ENCODE measurements at regions of chr1 and their contacts with region 1.

Region 1: DNA sequence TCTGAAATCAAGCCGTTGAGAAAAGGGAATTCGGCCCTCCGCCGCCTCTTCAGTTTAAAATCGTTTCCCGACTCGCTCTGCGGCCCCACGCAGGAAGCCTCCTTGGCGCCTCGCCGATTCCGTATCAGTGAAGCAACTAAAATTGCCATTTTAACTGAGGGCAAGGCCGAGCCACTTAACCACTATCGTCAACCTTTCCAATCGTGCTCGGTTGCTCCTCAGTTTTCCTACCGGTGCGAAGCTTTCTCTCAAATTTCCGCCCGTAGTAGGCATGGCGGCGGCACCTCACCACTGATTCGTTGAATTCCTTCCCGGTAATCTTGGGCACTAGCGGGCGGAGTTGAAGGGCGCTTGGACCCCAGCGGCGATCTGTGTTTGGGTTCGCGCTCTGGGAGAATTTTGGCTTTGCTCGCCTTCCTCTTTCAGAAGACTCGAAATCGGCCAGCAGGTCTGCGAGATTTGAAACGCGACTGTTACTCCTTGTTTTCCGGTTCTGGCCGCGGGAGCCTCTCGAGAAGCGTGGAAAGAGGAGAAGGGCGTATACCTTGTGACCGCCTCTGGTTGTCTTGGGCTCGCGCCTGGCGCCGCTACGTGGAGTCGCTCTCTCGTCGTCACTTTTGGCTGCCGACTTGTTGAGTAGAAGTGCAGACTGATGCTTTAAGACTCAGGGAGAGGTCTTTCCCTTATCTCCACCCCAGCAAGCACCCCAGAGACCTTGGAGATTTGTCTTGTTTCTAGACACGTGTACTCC is at the starts of genes CENPL and DARS2:
- DNase-seq: peak; percentile 67 to 93 (median 91)
- ATAC-seq: peak; percentile 94
- H3K4me3 ChIP-seq: peak within 1 kb of the TSS; percentile 99
- H3K4me3 Mint-ChIP-seq: peak within 1 kb of the TSS; percentile 87 to 99 (median 94)
- H3K27ac ChIP-seq: peak within 1 kb of the TSS; percentile 80
- H3K27ac Mint-ChIP-seq: peak within 1 kb of the TSS; percentile 91 to 98 (median 96)
- H3K4me1 ChIP-seq: peaks cover 10 to 14% of the 10 kb centered on the region in 2 donors
- H3K4me1 Mint-ChIP-seq: peaks cover 32 to 68% (median 50%) of the 10 kb centered on the region in 7 donors
- H3K27me3 ChIP-seq: no peaks in the 10 kb centered on the region
- H3K27me3 Mint-ChIP-seq: no peaks in the 10 kb centered on the region
- total RNA-seq, gene CENPL: 5.2 to 25.1 (median 9.5) TPM
- total RNA-seq, gene DARS2: 3.6 to 26.0 (median 13.5) TPM

Region 2: GRCh38 chr1:172826096-172826743 is 998.3 kb before region 1 on chr1:
- CTCF ChIA-PET with region 1: no interaction called
- POLR2A ChIA-PET with region 1: no interaction called
- intact Hi-C with region 1: loop called in 1 of 2 experiments (anchors 10 kb)
- DNase-seq: peak in 1 of 9 donors; percentile 15
- ATAC-seq: peak; percentile 49
- H3K4me3 ChIP-seq: no peak overlapping the region
- H3K4me3 Mint-ChIP-seq: no peak overlapping the region
- H3K27ac ChIP-seq: no peak overlapping the region
- H3K27ac Mint-ChIP-seq: no peak overlapping the region
- H3K4me1 ChIP-seq: peaks cover 4 to 11% of the 10 kb centered on the region in 2 donors
- H3K4me1 Mint-ChIP-seq: peaks cover 0 to 10% (median 0%) of the 10 kb centered on the region in 7 donors
- H3K27me3 ChIP-seq: no peaks in the 10 kb centered on the region
- H3K27me3 Mint-ChIP-seq: peaks cover 0 to 28% (median 0%) of the 10 kb centered on the region in 5 donors

Region 3: DNA sequence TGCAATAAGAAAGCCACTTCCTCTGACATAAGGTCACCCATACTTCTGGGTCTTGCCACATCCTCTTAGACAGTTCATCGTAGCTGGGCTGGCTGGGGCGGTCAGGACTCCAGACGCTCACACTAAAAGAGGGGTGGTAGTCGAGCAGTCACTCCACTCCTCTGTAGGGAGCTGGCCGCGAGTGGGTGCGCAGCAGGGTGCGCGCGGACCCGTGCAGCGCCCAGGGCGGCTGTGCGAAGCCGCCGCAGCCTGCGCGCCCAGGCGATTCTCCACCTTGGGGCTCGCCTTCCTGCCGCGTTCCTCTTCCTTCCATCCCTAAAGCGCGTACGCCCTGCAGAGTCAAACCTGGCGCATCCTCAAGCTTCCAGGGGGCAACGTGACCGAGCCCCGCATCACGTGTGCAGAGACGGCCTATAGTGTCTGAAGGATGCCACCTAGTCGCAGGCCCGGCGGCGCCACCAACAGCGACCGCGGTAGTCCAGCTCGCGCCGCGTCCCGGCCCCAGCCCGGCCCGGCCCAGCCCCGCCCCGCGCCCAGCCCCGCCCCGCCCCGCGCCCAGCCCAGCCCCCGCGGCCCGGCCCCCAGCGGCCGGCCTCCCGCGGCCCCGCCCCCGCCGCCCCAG is 347.7 kb before region 1 on chr1:
- CTCF ChIA-PET with region 1: interaction called, 4 read pairs
- POLR2A ChIA-PET with region 1: interaction called, 6 read pairs
- intact Hi-C with region 1: loop called (anchors 1 kb)
- DNase-seq: peak; percentile 65 to 82 (median 78)
- ATAC-seq: peak; percentile 87
- H3K4me3 ChIP-seq: peak overlapping the region; percentile 92
- H3K4me3 Mint-ChIP-seq: peak overlapping the region; percentile 82 to 94 (median 91)
- H3K27ac ChIP-seq: peak overlapping the region; percentile 78
- H3K27ac Mint-ChIP-seq: peak overlapping the region; percentile 61 to 96 (median 89)
- H3K4me1 ChIP-seq: peaks cover 20 to 31% of the 10 kb centered on the region in 2 donors
- H3K4me1 Mint-ChIP-seq: peaks cover 38 to 72% (median 63%) of the 10 kb centered on the region in 7 donors
- H3K27me3 ChIP-seq: no peaks in the 10 kb centered on the region
- H3K27me3 Mint-ChIP-seq: no peaks in the 10 kb centered on the region

Region 4: GRCh38 chr1:174022080-174022975 is 197.8 kb after region 1 on chr1 and contains the start of gene RC3H1:
- CTCF ChIA-PET with region 1: interaction called, 3 read pairs
- POLR2A ChIA-PET with region 1: interaction called, 7 read pairs
- intact Hi-C with region 1: loop called (anchors 1 kb)
- DNase-seq: peak; percentile 75 to 89 (median 83)
- ATAC-seq: peak; percentile 97
- H3K4me3 ChIP-seq: peak within 1 kb of the TSS; percentile 86
- H3K4me3 Mint-ChIP-seq: peak within 1 kb of the TSS; percentile 85 to 100 (median 98)
- H3K27ac ChIP-seq: peak within 1 kb of the TSS; percentile 94
- H3K27ac Mint-ChIP-seq: peak within 1 kb of the TSS; percentile 90 to 99 (median 98)
- H3K4me1 ChIP-seq: peaks cover 24 to 32% of the 10 kb centered on the region in 2 donors
- H3K4me1 Mint-ChIP-seq: peaks cover 19 to 52% (median 49%) of the 10 kb centered on the region in 7 donors
- H3K27me3 ChIP-seq: no peaks in the 10 kb centered on the region
- H3K27me3 Mint-ChIP-seq: peaks cover 0 to 5% (median 0%) of the 10 kb centered on the region in 5 donors
- total RNA-seq, gene RC3H1: 36.5 to 49.5 (median 47.7) TPM

Measured in naive thymus-derived CD4-positive, alpha-beta T cell (primary cell).